ENCODE measurements at regions of chr15 and their contacts with region 1.

Region 1: GRCh38 chr15:66946578-66947164 is 118.7 kb upstream of the SMAD3 start:
- DNase-seq: peak; percentile 71
- ATAC-seq: peak; percentile 54
- H3K4me3 ChIP-seq: peak overlapping the region in 1 of 2 experiments; percentile 39; a peak in 2 of 4 replicates
- H3K27ac ChIP-seq: peak overlapping the region; percentile 100
- H3K4me1 ChIP-seq: peaks cover 62% of the 10 kb centered on the region
- H3K27me3 ChIP-seq: no peaks in the 10 kb centered on the region
- CTCF ChIP-seq: peak; percentile 91

Region 2: GRCh38 chr15:66931768-66932633 is 14.7 kb before region 1 on chr15:
- CTCF ChIA-PET with region 1: interaction called, 12 read pairs
- POLR2A ChIA-PET with region 1: no interaction called
- in situ Hi-C with region 1: no loop called
- intact Hi-C with region 1: no loop called
- DNase-seq: peak; percentile 83
- ATAC-seq: peak; percentile 97
- H3K4me3 ChIP-seq: peak overlapping the region in 1 of 2 experiments; percentile 23; a peak in 2 of 4 replicates
- H3K27ac ChIP-seq: peak overlapping the region; percentile 100
- H3K4me1 ChIP-seq: peaks cover 39% of the 10 kb centered on the region
- H3K27me3 ChIP-seq: no peaks in the 10 kb centered on the region
- CTCF ChIP-seq: no peak

Region 3: GRCh38 chr15:67047149-67047661 is 100.5 kb after region 1 on chr15:
- CTCF ChIA-PET with region 1: no interaction called
- POLR2A ChIA-PET with region 1: interaction called, 15 read pairs
- in situ Hi-C with region 1: no loop called
- intact Hi-C with region 1: no loop called
- DNase-seq: no peak
- ATAC-seq: no peak
- H3K4me3 ChIP-seq: no peak overlapping the region
- H3K27ac ChIP-seq: peak overlapping the region; percentile 97
- H3K4me1 ChIP-seq: peaks cover 63% of the 10 kb centered on the region
- H3K27me3 ChIP-seq: no peaks in the 10 kb centered on the region
- CTCF ChIP-seq: no peak

Region 4: DNA sequence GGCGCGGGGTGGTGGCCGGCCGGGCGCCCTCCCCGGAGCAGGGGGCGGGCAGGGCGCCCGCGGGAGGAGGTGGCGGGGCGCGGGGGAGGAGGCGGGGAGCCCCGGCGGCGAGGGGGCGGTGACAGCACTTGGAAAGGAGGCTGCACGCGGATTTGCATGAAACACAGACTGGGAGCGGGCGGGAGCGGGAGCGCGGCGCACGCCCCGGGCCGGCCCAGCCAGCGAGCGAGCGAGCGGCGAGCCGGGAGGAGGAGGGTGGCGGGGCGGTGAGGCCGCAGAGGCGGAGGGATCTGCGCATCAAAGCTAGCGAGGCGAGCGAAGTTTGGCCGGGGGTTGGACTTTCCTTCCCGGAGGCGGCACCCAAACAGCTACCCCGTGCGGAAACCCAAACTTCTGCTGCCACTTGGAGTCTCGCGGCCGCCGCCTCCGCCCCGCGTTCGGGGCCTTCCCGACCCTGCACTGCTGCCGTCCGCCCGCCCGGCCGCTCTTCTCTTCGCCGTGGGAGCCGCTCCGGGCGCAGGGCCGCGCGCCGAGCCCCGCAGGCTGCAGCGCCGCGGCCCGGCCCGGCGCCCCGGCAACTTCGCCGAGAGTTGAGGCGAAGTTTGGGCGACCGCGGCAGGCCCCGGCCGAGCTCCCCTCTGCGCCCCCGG is 118.9 kb after region 1 on chr15 and contains the start of gene SMAD3:
- CTCF ChIA-PET with region 1: interaction called, 3 read pairs
- POLR2A ChIA-PET with region 1: interaction called, 4 read pairs
- in situ Hi-C with region 1: no loop called
- intact Hi-C with region 1: loop called (anchors 2 kb)
- DNase-seq: no peak
- ATAC-seq: peak; percentile 82
- H3K4me3 ChIP-seq: peak within 1 kb of the TSS; percentile 93 to 98
- H3K27ac ChIP-seq: peak within 1 kb of the TSS; percentile 100
- H3K4me1 ChIP-seq: peaks cover 38% of the 10 kb centered on the region
- H3K27me3 ChIP-seq: no peaks in the 10 kb centered on the region
- CTCF ChIP-seq: no peak; the same call in 1 of the 2 replicates
- total RNA-seq, gene SMAD3: 394 TPM

Region 5: GRCh38 chr15:67109141-67110034 is 162.7 kb after region 1 on chr15:
- CTCF ChIA-PET with region 1: no interaction called
- POLR2A ChIA-PET with region 1: interaction called, 12 read pairs
- in situ Hi-C with region 1: no loop called
- intact Hi-C with region 1: no loop called
- DNase-seq: no peak
- ATAC-seq: peak; percentile 14
- H3K4me3 ChIP-seq: no peak overlapping the region
- H3K27ac ChIP-seq: peak overlapping the region; percentile 100
- H3K4me1 ChIP-seq: peaks cover 85% of the 10 kb centered on the region
- H3K27me3 ChIP-seq: no peaks in the 10 kb centered on the region
- CTCF ChIP-seq: no peak

Region 6: GRCh38 chr15:67146875-67147381 is 200.3 kb after region 1 on chr15:
- CTCF ChIA-PET with region 1: interaction called, 5 read pairs
- POLR2A ChIA-PET with region 1: no interaction called
- in situ Hi-C with region 1: no loop called
- intact Hi-C with region 1: loop called (anchors 5 kb)
- DNase-seq: no peak
- ATAC-seq: peak; percentile 4
- H3K4me3 ChIP-seq: no peak overlapping the region
- H3K27ac ChIP-seq: peak overlapping the region; percentile 100
- H3K4me1 ChIP-seq: peaks cover 100% of the 10 kb centered on the region
- H3K27me3 ChIP-seq: no peaks in the 10 kb centered on the region
- CTCF ChIP-seq: no peak

Region 7: DNA sequence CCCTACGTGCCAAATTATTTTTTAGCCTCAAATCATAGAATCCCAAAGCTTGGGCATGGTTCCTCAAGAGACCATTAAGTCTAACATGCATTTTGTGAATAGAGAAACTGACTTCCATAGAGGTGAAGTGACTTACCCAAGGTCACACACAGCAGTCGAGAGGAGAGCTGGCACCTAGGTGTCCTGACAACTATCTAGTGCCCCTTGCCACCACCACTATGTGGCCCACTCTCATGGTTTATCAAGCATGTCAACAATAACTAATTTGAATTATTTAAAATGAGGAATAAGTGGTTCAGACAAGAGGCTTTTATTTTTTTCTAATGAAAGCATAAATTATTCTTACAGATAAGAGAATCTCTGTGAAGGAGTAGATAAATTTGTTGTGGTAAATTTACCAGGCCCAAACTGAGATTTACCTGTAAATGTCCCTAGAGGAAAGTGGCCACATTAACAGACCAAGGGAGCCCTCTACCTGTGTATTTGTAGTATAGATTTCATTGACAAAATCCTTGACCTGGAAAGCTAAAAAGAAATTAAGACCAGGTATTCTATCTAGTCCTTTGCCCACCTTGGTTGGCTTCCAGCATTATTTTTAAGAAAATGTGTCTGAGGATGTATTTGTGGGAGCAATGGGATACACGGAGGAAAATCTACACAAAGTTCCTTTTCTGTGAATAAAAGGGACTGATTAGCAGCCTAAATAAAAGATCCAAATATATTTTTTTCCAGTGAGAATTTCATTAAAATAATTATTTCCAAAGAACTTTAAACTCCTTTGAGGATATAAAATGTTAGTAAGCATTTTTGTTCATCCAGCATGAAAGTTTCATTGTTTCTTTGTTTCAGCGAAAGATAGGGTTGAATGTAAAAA is 357.1 kb after region 1 on chr15:
- CTCF ChIA-PET with region 1: no interaction called
- POLR2A ChIA-PET with region 1: no interaction called
- in situ Hi-C with region 1: no loop called
- intact Hi-C with region 1: loop called (anchors 5 kb)
- DNase-seq: peak; percentile 10
- ATAC-seq: peak; percentile 93
- H3K4me3 ChIP-seq: no peak overlapping the region
- H3K27ac ChIP-seq: peak overlapping the region; percentile 60; the same call in 1 of the 2 replicates
- H3K4me1 ChIP-seq: peaks cover 15% of the 10 kb centered on the region
- H3K27me3 ChIP-seq: no peaks in the 10 kb centered on the region
- CTCF ChIP-seq: peak; percentile 69